Activated naive CD4-positive, alpha-beta T cell treated with anti-CD3 and anti-CD28 coated beads for 36 hours (primary cell): ENCODE measurements at regions of chr1 and their contacts with region 1.

Region 1: GRCh38 chr1:50348449-50349241 is 74.6 kb downstream of the DMRTA2 start:
- DNase-seq: peak; percentile 63
- H3K4me3 Mint-ChIP-seq: no peak overlapping the region
- H3K27ac Mint-ChIP-seq: no peak overlapping the region
- H3K4me1 Mint-ChIP-seq: no peaks in the 10 kb centered on the region
- H3K27me3 Mint-ChIP-seq: peaks cover 20% of the 10 kb centered on the region

Region 2: GRCh38 chr1:48563021-48563420 is 1785.6 kb before region 1 on chr1:
- CTCF ChIA-PET with region 1: no interaction called
- intact Hi-C with region 1: loop called (anchors 10 kb)
- DNase-seq: no peak
- H3K4me3 Mint-ChIP-seq: no peak overlapping the region
- H3K27ac Mint-ChIP-seq: no peak overlapping the region
- H3K4me1 Mint-ChIP-seq: no peaks in the 10 kb centered on the region
- H3K27me3 Mint-ChIP-seq: peaks cover 11% of the 10 kb centered on the region

Region 3: DNA sequence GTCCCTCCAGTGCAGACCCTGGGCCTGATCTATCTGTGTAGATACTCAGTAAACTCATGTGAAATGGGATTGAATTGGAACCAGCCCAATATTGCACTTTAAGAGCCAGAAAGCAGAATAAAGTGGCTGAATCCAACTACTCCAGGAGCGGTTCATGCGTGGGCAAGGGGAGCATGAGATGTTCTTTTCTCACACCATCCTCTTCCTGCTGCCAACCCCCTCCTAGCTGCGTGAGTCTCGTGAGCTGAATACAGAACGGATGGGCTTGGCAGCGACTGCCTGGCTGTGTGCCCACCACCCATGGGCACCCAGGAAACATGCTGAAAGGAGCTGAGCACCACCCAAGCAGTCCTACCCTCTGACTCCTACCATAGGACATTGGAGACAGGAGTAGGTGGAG is 111.6 kb before region 1 on chr1:
- CTCF ChIA-PET with region 1: no interaction called
- intact Hi-C with region 1: no loop called
- DNase-seq: no peak
- H3K4me3 Mint-ChIP-seq: no peak overlapping the region
- H3K27ac Mint-ChIP-seq: no peak overlapping the region
- H3K4me1 Mint-ChIP-seq: no peaks in the 10 kb centered on the region
- H3K27me3 Mint-ChIP-seq: peaks cover 6% of the 10 kb centered on the region